Right ventricle myocardium inferior (tissue), 1 donor: ENCODE measurements at regions of chr11 and their contacts with region 1.

Region 1: DNA sequence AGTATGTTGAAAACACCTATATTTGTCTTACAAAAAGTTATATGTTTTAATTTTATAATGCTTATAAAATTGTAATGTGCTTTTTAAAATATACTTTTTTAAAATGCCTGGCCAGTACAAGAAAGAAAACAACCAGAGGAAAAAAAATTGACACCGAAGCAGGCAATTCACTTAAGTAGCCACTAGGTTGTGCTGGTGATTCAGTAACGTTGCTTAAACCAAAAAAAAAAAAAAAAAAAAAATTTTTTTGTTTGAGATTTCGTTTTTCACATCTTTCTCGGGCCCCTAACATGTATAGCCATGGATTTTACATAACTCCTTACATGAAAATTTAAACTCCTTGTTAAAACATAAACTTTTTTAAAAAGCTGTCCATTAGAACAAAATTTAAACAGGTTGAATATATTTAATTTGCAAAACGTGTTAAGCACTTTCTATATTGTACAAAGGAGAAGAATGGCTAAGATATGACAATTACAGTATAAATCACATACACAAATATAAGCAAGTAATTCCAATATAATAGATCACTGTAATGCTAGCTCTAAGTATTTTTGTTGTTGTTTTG is 9.2 kb downstream of the OR8B4 start:
- DNase-seq: no peak
- ATAC-seq: no peak

Region 2: DNA sequence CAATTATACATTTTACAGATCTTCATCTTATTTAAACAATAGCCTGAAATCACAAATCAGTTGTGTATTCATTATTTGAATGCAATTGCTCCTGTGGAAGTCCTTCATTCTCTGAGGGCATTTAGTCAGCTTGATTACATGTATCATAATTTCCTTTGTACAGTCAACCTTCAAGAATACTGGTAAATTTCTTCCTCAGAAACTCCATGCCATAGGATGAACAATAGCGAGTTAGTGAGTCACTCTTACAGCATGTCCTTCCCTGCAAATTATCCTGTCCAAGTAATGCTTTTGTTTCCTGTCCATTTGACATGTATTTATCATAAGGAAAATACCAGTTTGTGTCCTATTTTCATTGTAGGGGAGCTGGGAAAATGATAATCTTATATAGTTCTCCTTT is 441.6 kb before region 1 on chr11:
- intact Hi-C with region 1: no loop called
- DNase-seq: no peak
- ATAC-seq: no peak

Region 3: DNA sequence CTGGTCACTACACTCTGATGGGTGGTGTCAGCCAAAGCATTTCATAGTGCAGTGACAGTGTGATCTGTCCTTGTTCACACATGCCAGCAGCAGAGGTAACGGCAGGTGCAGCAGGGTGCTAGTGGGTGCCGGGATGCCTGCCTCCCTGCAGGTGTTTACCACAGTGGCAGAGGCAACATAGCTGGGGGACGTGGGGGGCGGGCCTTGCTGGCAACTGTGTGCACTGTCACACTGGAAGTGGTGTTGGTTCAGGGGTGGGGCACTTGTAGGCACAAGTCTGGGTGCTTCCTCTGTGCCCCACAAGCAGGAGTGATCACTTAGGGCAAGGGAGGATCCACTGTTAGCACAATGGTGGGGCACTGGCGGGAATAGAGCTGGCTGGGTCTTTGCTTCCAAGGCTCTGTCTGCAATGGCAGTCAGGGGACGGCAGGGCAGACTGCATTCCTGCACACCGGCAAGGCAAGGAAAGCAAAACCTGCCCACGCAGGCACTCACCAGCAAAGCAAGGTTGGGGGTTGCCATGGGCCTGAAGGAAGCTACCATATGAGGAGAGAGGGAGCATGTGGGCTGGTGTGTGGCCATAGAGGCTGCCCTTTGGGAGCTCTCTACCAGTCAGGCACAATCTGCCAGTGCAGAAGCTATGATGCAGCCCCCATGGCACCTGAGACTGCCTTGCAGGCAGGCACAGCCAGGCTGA is 94.7 kb after region 1 on chr11:
- intact Hi-C with region 1: no loop called
- DNase-seq: no peak
- ATAC-seq: no peak

Region 4: DNA sequence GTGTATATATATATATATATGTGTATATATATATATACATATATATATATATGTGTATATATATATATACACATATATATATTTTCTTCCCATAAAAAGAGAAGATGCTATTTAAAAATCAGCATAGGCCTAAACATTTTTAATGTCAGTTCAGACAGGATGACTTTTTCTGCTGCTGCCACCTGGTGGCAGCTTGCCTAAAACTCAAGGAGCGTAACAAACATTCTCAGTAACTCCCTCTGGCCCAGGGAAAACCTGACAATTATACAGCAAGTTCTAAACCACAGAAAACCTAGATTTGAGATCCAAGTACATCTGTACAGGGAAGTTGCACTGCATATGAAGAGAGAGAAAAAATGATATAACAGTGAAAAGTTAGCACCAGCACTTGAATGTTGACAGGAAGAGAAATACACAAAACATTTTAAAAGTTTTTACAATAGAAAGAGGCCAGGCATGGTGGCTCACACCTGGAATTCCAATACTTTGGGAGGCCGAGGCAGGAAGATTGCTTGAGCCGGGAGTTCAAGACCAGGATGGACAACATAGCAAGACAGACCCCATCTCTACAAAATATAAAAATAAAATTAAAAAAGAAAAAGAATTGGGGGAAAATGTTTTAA is 170.9 kb after region 1 on chr11:
- intact Hi-C with region 1: loop called (anchors 2 kb)
- DNase-seq: peak; percentile 71
- ATAC-seq: no peak